ENCODE measurements at regions of chr6 and their contacts with region 1.

Region 1: DNA sequence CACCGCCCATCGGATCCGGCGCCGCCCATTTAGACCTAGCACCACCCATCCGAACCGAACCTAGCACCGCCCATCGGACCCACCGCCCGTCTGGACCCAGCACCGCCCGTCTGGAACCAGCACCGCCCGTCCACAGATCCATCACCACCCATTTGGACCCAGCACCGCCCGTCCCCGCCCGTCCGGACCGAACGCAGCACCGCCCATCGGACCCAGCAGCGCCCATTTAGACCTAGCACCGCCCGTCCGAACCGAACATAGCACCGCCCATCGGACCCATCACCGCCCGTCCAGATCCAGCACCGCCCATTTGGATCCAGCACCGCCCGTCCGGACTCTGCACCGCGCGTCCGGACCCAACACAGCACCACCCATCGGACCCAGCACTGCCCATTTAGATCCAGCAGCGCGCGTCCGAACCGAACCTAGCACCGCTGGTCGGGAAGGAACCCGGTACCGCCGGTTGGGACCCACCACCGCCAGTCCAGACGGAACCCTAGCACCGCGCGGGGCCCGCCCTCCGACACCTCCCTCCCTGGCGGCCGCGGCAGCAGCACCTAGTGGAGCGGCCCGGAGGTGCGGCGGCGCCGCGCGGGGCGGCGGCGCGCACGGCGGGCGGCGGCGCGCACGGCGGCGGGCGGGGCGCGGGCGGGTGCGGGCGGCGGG is 348 bp upstream of the AFDN start:
- DNase-seq: peak; percentile 68 to 83
- H3K4me3 ChIP-seq: peak overlapping the region; percentile 99
- H3K4me3 Mint-ChIP-seq: peak overlapping the region; percentile 96
- H3K27ac Mint-ChIP-seq: peak overlapping the region; percentile 93
- H3K4me1 ChIP-seq: peaks cover 30% of the 10 kb centered on the region
- H3K4me1 Mint-ChIP-seq: peaks cover 14% of the 10 kb centered on the region
- H3K27me3 ChIP-seq: no peaks in the 10 kb centered on the region
- H3K27me3 Mint-ChIP-seq: no peaks in the 10 kb centered on the region
- CTCF ChIP-seq: peak; percentile 25 to 37

Region 2: GRCh38 chr6:167501781-167502385 is 324.5 kb before region 1 on chr6:
- CTCF ChIA-PET with region 1: no interaction called
- POLR2A ChIA-PET with region 1: no interaction called
- intact Hi-C with region 1: loop called (anchors 10 kb)
- DNase-seq: peak; percentile 49 to 59
- H3K4me3 ChIP-seq: no peak overlapping the region
- H3K4me3 Mint-ChIP-seq: no peak overlapping the region
- H3K27ac Mint-ChIP-seq: no peak overlapping the region
- H3K4me1 ChIP-seq: peaks cover 7% of the 10 kb centered on the region
- H3K4me1 Mint-ChIP-seq: no peaks in the 10 kb centered on the region
- H3K27me3 ChIP-seq: no peaks in the 10 kb centered on the region
- H3K27me3 Mint-ChIP-seq: no peaks in the 10 kb centered on the region
- CTCF ChIP-seq: peak; percentile 34 to 58

Region 3: DNA sequence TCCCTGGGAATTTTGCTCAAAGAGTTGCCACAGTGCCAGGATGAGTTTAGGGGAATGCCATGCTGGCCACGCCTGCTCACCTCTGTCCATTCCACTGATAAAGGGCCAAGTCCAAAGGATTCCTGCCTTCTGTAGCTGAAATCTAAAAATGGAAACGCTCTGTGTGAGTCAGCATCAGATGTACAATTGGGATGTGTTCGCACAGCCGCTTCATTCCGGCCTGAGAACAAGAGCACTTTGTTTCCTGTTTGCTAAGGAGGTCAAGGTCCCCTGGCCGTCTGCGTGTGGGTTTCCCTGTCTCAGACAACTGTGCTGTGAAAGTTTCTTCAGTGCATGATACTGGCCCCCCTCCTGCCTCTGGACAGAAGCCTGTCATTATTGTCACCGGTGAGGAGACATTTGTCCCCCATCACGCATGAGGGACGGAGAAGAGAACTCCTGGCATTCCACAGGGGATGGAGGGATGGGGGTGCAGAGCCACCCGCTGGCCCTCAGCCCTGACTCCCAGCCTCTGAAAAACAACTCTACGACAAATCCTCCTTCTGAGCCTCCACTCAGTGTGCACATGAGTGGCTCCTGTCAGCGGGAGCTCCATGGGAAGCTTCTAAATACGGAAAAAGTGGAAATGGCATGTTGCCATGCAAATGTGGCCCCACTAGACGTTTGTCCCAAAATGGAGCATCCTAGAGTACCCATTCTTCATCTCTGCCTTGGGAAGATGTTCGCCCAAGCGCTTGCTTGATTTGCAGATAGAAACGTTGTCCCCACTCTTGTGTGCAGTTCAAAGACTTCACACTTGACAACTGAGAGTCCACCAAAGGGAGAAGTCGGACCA is 143.1 kb before region 1 on chr6:
- CTCF ChIA-PET with region 1: no interaction called
- POLR2A ChIA-PET with region 1: no interaction called
- intact Hi-C with region 1: loop called (anchors 5 kb)
- DNase-seq: peak; percentile 61 to 86
- H3K4me3 ChIP-seq: no peak overlapping the region
- H3K4me3 Mint-ChIP-seq: peak overlapping the region; percentile 35
- H3K27ac Mint-ChIP-seq: peak overlapping the region; percentile 65
- H3K4me1 ChIP-seq: peaks cover 57% of the 10 kb centered on the region
- H3K4me1 Mint-ChIP-seq: peaks cover 40% of the 10 kb centered on the region
- H3K27me3 ChIP-seq: no peaks in the 10 kb centered on the region
- H3K27me3 Mint-ChIP-seq: no peaks in the 10 kb centered on the region
- CTCF ChIP-seq: no peak

Region 4: DNA sequence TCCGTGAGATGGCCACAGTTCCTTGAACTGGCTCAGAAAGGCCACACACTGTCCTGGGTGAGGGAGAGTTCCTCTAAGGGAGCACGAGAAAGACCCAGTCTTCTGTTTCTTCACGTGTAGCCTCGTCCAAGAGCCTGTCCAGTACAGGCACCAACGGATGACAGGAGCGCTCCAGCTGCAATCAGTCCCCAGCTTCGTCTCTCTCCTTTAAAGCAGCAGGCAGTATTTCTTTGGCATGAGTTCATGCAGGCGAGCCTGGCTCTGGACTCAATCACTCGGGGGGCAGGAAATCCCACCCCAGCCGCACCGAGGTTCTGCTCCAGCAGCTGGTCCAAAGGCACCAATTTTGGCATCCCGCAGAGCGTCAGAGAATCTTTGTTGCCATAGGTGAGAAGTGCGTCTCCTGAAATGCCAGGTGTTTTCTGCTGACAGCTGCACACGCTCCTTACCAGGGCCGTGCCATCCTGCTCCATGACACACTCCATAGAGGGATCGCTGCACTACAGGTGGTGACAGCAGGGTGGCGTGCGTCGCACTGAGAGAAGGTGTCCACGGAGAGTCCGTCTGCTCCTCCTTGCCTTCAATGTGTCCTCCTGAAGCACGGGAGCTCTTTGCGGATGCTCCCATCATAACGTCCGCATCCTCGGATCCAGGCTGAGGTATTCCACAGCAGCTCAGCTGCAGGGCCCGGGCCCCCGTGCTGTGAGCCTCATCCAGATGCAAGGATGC is 59.2 kb before region 1 on chr6:
- CTCF ChIA-PET with region 1: no interaction called
- POLR2A ChIA-PET with region 1: no interaction called
- intact Hi-C with region 1: no loop called
- DNase-seq: no peak
- H3K4me3 ChIP-seq: no peak overlapping the region
- H3K4me3 Mint-ChIP-seq: no peak overlapping the region
- H3K27ac Mint-ChIP-seq: no peak overlapping the region
- H3K4me1 ChIP-seq: peaks cover 2% of the 10 kb centered on the region; the same call in 1 of the 2 replicates
- H3K4me1 Mint-ChIP-seq: peaks cover 7% of the 10 kb centered on the region
- H3K27me3 ChIP-seq: no peaks in the 10 kb centered on the region
- H3K27me3 Mint-ChIP-seq: no peaks in the 10 kb centered on the region
- CTCF ChIP-seq: no peak

Region 5: DNA sequence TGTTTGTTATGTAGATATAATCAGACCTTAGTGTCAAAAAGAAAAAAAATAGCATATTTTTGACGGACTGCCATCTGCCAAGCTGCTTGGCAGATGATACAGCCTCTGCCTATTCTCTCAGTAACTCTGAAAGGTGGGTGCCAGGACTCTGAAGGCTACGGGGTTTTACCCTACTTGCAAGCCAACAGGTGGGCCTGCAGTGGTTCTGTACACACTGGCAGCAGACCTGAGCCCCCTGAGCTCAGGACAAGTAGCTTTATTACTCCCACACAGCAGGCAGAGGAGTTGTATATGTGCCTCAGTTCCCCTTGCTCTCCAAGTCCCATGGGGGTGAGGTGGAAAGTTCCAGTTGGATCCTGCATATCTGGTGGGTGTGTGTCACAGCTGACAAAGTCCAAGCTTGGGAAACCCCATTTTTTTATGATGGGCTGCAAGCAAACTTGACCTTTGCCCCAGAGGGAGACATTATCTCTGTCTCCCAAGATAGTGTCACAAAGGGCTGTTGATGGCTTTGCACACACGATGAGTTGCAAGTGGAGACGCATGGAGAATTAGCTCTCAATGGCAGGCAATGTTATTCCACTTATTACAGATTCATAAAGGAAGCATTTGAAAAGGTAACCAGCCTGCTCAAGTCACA is 20.2 kb before region 1 on chr6:
- CTCF ChIA-PET with region 1: interaction called, 10 read pairs
- POLR2A ChIA-PET with region 1: no interaction called
- intact Hi-C with region 1: no loop called
- DNase-seq: peak; percentile 74 to 85
- H3K4me3 ChIP-seq: no peak overlapping the region
- H3K4me3 Mint-ChIP-seq: no peak overlapping the region
- H3K27ac Mint-ChIP-seq: no peak overlapping the region
- H3K4me1 ChIP-seq: peaks cover 26% of the 10 kb centered on the region
- H3K4me1 Mint-ChIP-seq: peaks cover 6% of the 10 kb centered on the region
- H3K27me3 ChIP-seq: no peaks in the 10 kb centered on the region
- H3K27me3 Mint-ChIP-seq: no peaks in the 10 kb centered on the region
- CTCF ChIP-seq: no peak

Region 6: DNA sequence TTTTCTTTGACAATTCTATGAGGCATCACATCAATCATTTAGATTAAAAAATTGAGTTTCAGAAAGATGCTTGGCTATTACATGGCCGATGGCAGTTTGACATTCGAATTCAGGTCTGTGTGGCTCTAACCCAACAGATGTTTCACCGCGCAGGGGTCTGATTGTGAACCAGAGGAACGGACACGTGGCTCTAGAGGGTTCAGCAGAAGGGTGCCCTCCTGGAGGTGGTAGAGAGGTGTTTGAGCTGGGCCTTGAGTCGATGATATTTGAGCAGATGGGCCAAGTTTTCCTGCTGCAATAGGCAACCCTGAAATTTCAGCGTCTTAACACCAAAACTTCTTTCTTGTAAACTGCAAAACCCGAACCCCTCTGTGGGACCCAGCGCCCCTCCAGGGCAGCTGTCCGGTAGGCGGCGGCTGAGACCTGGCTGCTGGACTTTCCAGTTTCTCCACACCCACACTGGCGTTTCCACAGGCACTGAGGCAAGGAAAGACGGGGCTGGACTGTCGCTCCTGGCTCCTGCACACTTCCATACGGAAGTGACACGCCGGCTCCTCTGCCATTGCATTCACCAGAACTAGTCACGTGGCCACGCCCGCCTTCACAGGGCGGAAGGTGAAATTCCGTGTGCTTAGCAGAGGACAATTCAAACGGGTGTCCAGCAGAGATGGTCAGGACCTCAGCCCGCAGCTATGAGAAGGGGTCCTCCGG is 10.9 kb before region 1 on chr6:
- CTCF ChIA-PET with region 1: interaction called, 3 read pairs
- POLR2A ChIA-PET with region 1: no interaction called
- intact Hi-C with region 1: loop called (anchors 1 kb)
- DNase-seq: peak; percentile 92 to 95
- H3K4me3 ChIP-seq: peak overlapping the region; percentile 69
- H3K4me3 Mint-ChIP-seq: peak overlapping the region; percentile 85
- H3K27ac Mint-ChIP-seq: peak overlapping the region; percentile 88
- H3K4me1 ChIP-seq: peaks cover 4% of the 10 kb centered on the region; the same call in 1 of the 2 replicates
- H3K4me1 Mint-ChIP-seq: peaks cover 17% of the 10 kb centered on the region
- H3K27me3 ChIP-seq: no peaks in the 10 kb centered on the region
- H3K27me3 Mint-ChIP-seq: no peaks in the 10 kb centered on the region
- CTCF ChIP-seq: peak; percentile 44 to 74

Region 7: GRCh38 chr6:167898673-167899311 is 72.4 kb after region 1 on chr6:
- CTCF ChIA-PET with region 1: no interaction called
- POLR2A ChIA-PET with region 1: no interaction called
- intact Hi-C with region 1: loop called (anchors 5 kb)
- DNase-seq: no peak
- H3K4me3 ChIP-seq: no peak overlapping the region
- H3K4me3 Mint-ChIP-seq: no peak overlapping the region
- H3K27ac Mint-ChIP-seq: no peak overlapping the region
- H3K4me1 ChIP-seq: no peaks in the 10 kb centered on the region
- H3K4me1 Mint-ChIP-seq: peaks cover 11% of the 10 kb centered on the region
- H3K27me3 ChIP-seq: no peaks in the 10 kb centered on the region
- H3K27me3 Mint-ChIP-seq: no peaks in the 10 kb centered on the region
- CTCF ChIP-seq: peak; percentile 53 to 60

Region 8: GRCh38 chr6:168088161-168089053 is 262.0 kb after region 1 on chr6:
- CTCF ChIA-PET with region 1: no interaction called
- POLR2A ChIA-PET with region 1: no interaction called
- intact Hi-C with region 1: loop called (anchors 2 kb)
- DNase-seq: peak; percentile 88 to 93
- H3K4me3 ChIP-seq: no peak overlapping the region
- H3K4me3 Mint-ChIP-seq: peak overlapping the region; percentile 48
- H3K27ac Mint-ChIP-seq: peak overlapping the region; percentile 92
- H3K4me1 ChIP-seq: peaks cover 57% of the 10 kb centered on the region
- H3K4me1 Mint-ChIP-seq: peaks cover 33% of the 10 kb centered on the region
- H3K27me3 ChIP-seq: no peaks in the 10 kb centered on the region
- H3K27me3 Mint-ChIP-seq: no peaks in the 10 kb centered on the region
- CTCF ChIP-seq: no peak